Endothelial cell of umbilical vein (primary cell): ENCODE measurements at regions of chr2 and their contacts with region 1.

Region 1: GRCh38 chr2:239831001-239831731 is 194.0 kb downstream of the NDUFA10 start:
- DNase-seq: peak; percentile 67
- H3K4me3 ChIP-seq: no peak overlapping the region
- H3K27ac ChIP-seq: peak overlapping the region; percentile 59
- H3K4me1 ChIP-seq: peaks cover 12% of the 10 kb centered on the region
- H3K27me3 ChIP-seq: no peaks in the 10 kb centered on the region
- CTCF ChIP-seq: no peak
- POLR2A ChIP-seq: no peak

Region 2: DNA sequence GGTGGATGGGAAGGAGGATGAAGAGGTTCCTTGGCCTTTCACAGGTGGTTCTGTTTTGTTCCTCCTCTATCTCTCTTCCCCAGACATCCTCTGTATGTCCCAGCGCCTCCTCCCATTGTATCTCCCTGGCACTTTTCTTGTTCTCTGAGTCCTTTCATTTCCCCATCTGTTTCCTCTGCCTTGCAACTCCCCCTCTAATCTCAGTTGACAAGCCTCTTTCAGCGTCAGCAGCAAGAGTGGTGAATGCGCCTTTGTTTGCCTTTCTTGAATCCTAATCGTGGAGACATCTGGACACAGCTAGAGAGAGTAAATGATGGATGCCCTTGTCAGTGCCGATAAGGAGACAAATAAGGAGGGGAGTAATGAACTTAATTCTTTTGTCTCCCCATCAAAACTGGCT is 27.0 kb after region 1 on chr2:
- CTCF ChIA-PET with region 1: no interaction called
- POLR2A ChIA-PET with region 1: no interaction called
- dilution Hi-C with region 1: no loop called
- intact Hi-C with region 1: loop called (anchors 1 kb)
- DNase-seq: peak; percentile 45
- H3K4me3 ChIP-seq: no peak overlapping the region
- H3K27ac ChIP-seq: peak overlapping the region; percentile 52
- H3K4me1 ChIP-seq: peaks cover 6% of the 10 kb centered on the region
- H3K27me3 ChIP-seq: no peaks in the 10 kb centered on the region
- CTCF ChIP-seq: no peak
- POLR2A ChIP-seq: no peak

Region 3: GRCh38 chr2:239979243-239980023 is 148.3 kb after region 1 on chr2:
- CTCF ChIA-PET with region 1: no interaction called
- POLR2A ChIA-PET with region 1: no interaction called
- dilution Hi-C with region 1: no loop called
- intact Hi-C with region 1: loop called (anchors 1 kb)
- DNase-seq: peak; percentile 23
- H3K4me3 ChIP-seq: no peak overlapping the region
- H3K27ac ChIP-seq: no peak overlapping the region
- H3K4me1 ChIP-seq: no peaks in the 10 kb centered on the region
- H3K27me3 ChIP-seq: no peaks in the 10 kb centered on the region
- CTCF ChIP-seq: peak; percentile 26 to 53
- POLR2A ChIP-seq: no peak